Heart left ventricle (tissue), 16 donors: ENCODE measurements at regions of chr11 and their contacts with region 1.

Region 1: DNA sequence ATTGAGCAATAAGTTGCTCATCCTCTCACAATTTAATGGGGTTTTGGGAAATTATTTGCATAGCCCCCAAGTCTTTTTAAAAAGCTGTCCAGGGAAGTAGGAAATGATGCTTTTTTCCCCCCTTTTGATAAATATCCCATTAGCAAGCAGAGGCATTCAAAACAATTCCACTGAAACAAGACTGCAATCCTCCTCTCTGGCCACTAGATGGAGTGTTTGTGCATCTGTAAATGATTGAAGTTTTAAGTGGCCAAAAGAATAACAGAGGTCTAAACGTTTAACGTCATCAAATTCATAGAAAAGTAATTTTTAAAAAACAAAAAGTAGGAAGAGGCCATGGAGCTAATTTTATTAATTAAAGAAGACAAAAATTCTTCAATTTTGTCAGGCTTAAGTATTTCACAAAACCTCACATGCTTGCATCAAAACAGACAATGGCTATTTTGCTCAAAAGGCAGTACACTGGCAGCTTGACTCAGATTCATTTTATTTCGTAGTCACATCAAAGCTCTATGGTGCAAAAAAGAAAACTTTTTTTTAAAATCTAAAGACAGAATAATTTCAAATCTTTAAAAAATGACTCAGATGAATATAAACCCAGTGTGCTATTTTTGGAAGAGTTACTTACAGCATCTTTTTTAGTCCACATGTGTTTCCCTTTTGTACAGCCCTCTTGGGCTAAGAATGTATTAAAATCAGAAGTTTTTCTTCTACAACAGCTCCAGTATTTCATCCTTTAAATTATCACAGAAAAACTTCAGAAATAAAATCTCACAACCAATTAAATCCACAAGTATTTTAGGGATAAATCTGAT is 17.8 kb downstream of the CHORDC1 start:
- DNase-seq: no peak
- ATAC-seq: no peak
- H3K4me3 ChIP-seq: no peak overlapping the region
- H3K27ac ChIP-seq: no peak overlapping the region
- H3K4me1 ChIP-seq: peaks cover 0 to 10% (median 0%) of the 10 kb centered on the region in 12 donors
- H3K27me3 ChIP-seq: no peaks in the 10 kb centered on the region
- CTCF ChIP-seq: peak; percentile 78 to 96 (median 88)
- POLR2A ChIP-seq: no peak

Region 2: GRCh38 chr11:90222459-90223247 is 17.6 kb after region 1 on chr11 and contains the start of gene CHORDC1:
- intact Hi-C with region 1: loop called in 1 of 10 experiments (anchors 2 kb)
- DNase-seq: peak; percentile 89 to 96 (median 94)
- ATAC-seq: peak; percentile 93 to 98 (median 97)
- H3K4me3 ChIP-seq: peak within 1 kb of the TSS; percentile 38 to 96 (median 82)
- H3K27ac ChIP-seq: peak within 1 kb of the TSS; percentile 70 to 95 (median 92)
- H3K4me1 ChIP-seq: peaks cover 3 to 57% (median 21%) of the 10 kb centered on the region in 12 donors
- H3K27me3 ChIP-seq: no peaks in the 10 kb centered on the region
- CTCF ChIP-seq: no peak
- POLR2A ChIP-seq: peak; percentile 39 to 96
- total RNA-seq, gene CHORDC1: 21.7 to 49.4 (median 28.5) TPM

Region 3: DNA sequence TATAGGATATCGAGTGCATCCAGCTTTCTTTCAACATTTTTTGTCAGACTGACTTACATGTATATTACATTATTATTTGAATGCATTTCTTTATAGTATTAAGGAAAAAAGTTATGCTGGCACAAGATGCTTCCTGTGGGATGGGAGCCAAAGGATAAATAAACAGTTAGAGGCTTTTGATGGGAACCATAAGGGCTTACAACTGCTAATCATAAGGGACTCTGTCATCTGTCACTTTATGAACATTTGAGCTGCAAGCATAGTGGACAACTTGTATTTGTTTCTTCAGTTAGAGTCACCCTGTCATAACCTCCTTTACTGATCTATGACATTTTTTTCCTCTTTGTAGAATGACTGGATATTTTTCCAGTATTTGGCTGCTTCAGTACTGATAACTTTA is 150.2 kb after region 1 on chr11:
- intact Hi-C with region 1: no loop called
- DNase-seq: no peak
- ATAC-seq: no peak
- H3K4me3 ChIP-seq: no peak overlapping the region
- H3K27ac ChIP-seq: no peak overlapping the region
- H3K4me1 ChIP-seq: no peaks in the 10 kb centered on the region
- H3K27me3 ChIP-seq: no peaks in the 10 kb centered on the region
- CTCF ChIP-seq: no peak
- POLR2A ChIP-seq: no peak

Region 4: GRCh38 chr11:90447618-90448017 is 242.6 kb after region 1 on chr11:
- intact Hi-C with region 1: loop called in 1 of 10 experiments (anchors 10 kb)
- DNase-seq: no peak
- ATAC-seq: peak in 3 of 4 donors; percentile 41 to 51 (median 45)
- H3K4me3 ChIP-seq: no peak overlapping the region
- H3K27ac ChIP-seq: peak overlapping the region in 1 of 12 donors; percentile 23
- H3K4me1 ChIP-seq: peaks cover 0 to 28% (median 7%) of the 10 kb centered on the region in 12 donors
- H3K27me3 ChIP-seq: no peaks in the 10 kb centered on the region
- CTCF ChIP-seq: no peak
- POLR2A ChIP-seq: no peak